CD8-positive, alpha-beta T cell (primary cell): ENCODE measurements at regions of chr6 and their contacts with region 1.

Region 1: GRCh38 chr6:109440331-109441068 is at the starts of genes PPIL6 and SMPD2:
- DNase-seq: peak; percentile 61 to 92 (median 75)
- ATAC-seq: peak; percentile 79
- H3K4me3 ChIP-seq: peak within 1 kb of the TSS; percentile 68 to 92
- H3K4me3 Mint-ChIP-seq: peak within 1 kb of the TSS; percentile 89
- H3K27ac ChIP-seq: peak within 1 kb of the TSS; percentile 69 to 83
- H3K27ac Mint-ChIP-seq: peak within 1 kb of the TSS; percentile 93
- H3K4me1 ChIP-seq: peaks cover 26% of the 10 kb centered on the region
- H3K4me1 Mint-ChIP-seq: peaks cover 35% of the 10 kb centered on the region
- H3K27me3 ChIP-seq: no peaks in the 10 kb centered on the region
- H3K27me3 Mint-ChIP-seq: no peaks in the 10 kb centered on the region
- CTCF ChIP-seq: peak; percentile 31
- total RNA-seq, gene PPIL6: 1.3 to 1.4 TPM
- total RNA-seq, gene SMPD2: 22.8 to 23.9 TPM

Region 2: GRCh38 chr6:109336221-109336961 is 104.1 kb before region 1 on chr6:
- CTCF ChIA-PET with region 1: no interaction called
- POLR2A ChIA-PET with region 1: no interaction called
- intact Hi-C with region 1: no loop called
- DNase-seq: no peak
- ATAC-seq: no peak
- H3K4me3 ChIP-seq: no peak overlapping the region
- H3K4me3 Mint-ChIP-seq: no peak overlapping the region
- H3K27ac ChIP-seq: no peak overlapping the region
- H3K27ac Mint-ChIP-seq: no peak overlapping the region
- H3K4me1 ChIP-seq: no peaks in the 10 kb centered on the region
- H3K4me1 Mint-ChIP-seq: peaks cover 3% of the 10 kb centered on the region
- H3K27me3 ChIP-seq: no peaks in the 10 kb centered on the region
- H3K27me3 Mint-ChIP-seq: no peaks in the 10 kb centered on the region
- CTCF ChIP-seq: no peak

Region 3: DNA sequence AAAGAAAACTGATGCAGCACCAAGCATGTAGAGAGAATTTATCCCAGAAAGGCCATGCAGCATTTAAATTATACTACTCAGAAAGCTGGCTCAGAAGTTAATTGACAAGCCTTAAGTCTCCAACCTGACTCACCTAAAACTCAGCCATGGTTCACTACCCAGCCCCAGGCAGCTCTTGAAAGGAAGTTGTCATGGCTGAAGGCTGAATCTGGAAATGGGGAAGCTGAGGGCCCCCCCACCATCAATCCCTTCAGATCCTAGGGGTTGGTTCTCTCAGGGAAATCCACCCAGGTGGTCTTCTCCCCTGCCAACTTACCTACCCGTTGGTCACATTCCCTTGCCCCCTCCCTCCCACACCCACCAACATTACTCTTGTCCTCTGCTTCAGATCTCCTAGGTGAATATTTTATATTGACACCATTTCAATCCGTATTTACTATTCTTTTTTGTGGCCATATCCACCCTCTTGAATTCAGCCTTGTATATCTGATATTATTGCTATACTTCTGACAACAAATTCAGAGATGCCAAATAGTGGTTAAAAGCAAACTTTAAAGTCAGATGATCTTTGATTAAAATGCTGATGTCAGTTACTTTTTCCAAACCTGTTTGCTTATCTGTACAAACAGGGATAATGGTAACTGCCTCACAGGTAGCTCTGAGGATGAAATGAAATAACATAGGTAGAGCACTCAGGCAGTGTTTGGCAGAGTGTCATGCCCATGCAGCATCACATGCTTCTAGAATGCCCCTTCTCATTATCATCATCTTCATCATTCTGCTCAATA is 19.5 kb before region 1 on chr6:
- CTCF ChIA-PET with region 1: no interaction called
- POLR2A ChIA-PET with region 1: no interaction called
- intact Hi-C with region 1: no loop called
- DNase-seq: no peak
- ATAC-seq: no peak
- H3K4me3 ChIP-seq: no peak overlapping the region
- H3K4me3 Mint-ChIP-seq: no peak overlapping the region
- H3K27ac ChIP-seq: no peak overlapping the region
- H3K27ac Mint-ChIP-seq: no peak overlapping the region
- H3K4me1 ChIP-seq: no peaks in the 10 kb centered on the region
- H3K4me1 Mint-ChIP-seq: no peaks in the 10 kb centered on the region
- H3K27me3 ChIP-seq: no peaks in the 10 kb centered on the region
- H3K27me3 Mint-ChIP-seq: no peaks in the 10 kb centered on the region
- CTCF ChIP-seq: no peak

Region 4: GRCh38 chr6:109455502-109456282 is 15.2 kb after region 1 on chr6 and contains the start of gene MICAL1:
- CTCF ChIA-PET with region 1: interaction called, 25 read pairs
- POLR2A ChIA-PET with region 1: interaction called, 74 read pairs
- intact Hi-C with region 1: loop called (anchors 1 kb)
- DNase-seq: peak; percentile 53 to 91 (median 77)
- ATAC-seq: peak; percentile 58
- H3K4me3 ChIP-seq: peak within 1 kb of the TSS; percentile 93 to 99
- H3K4me3 Mint-ChIP-seq: peak within 1 kb of the TSS; percentile 97
- H3K27ac ChIP-seq: peak within 1 kb of the TSS; percentile 89 to 98
- H3K27ac Mint-ChIP-seq: peak within 1 kb of the TSS; percentile 98
- H3K4me1 ChIP-seq: peaks cover 55% of the 10 kb centered on the region
- H3K4me1 Mint-ChIP-seq: peaks cover 65% of the 10 kb centered on the region
- H3K27me3 ChIP-seq: no peaks in the 10 kb centered on the region
- H3K27me3 Mint-ChIP-seq: no peaks in the 10 kb centered on the region
- CTCF ChIP-seq: no peak
- total RNA-seq, gene MICAL1: 68.0 to 76.4 TPM

Region 5: GRCh38 chr6:109472132-109472995 is 31.9 kb after region 1 on chr6:
- CTCF ChIA-PET with region 1: no interaction called
- POLR2A ChIA-PET with region 1: no interaction called
- intact Hi-C with region 1: no loop called
- DNase-seq: no peak
- ATAC-seq: no peak
- H3K4me3 ChIP-seq: no peak overlapping the region
- H3K4me3 Mint-ChIP-seq: no peak overlapping the region
- H3K27ac ChIP-seq: no peak overlapping the region
- H3K27ac Mint-ChIP-seq: peak overlapping the region; percentile 42
- H3K4me1 ChIP-seq: peaks cover 13% of the 10 kb centered on the region
- H3K4me1 Mint-ChIP-seq: peaks cover 74% of the 10 kb centered on the region
- H3K27me3 ChIP-seq: no peaks in the 10 kb centered on the region
- H3K27me3 Mint-ChIP-seq: no peaks in the 10 kb centered on the region
- CTCF ChIP-seq: no peak

Region 6: GRCh38 chr6:110547266-110547964 is 1106.9 kb after region 1 on chr6:
- CTCF ChIA-PET with region 1: no interaction called
- POLR2A ChIA-PET with region 1: no interaction called
- intact Hi-C with region 1: no loop called
- DNase-seq: no peak
- ATAC-seq: no peak
- H3K4me3 ChIP-seq: no peak overlapping the region
- H3K4me3 Mint-ChIP-seq: no peak overlapping the region
- H3K27ac ChIP-seq: no peak overlapping the region
- H3K27ac Mint-ChIP-seq: no peak overlapping the region
- H3K4me1 ChIP-seq: no peaks in the 10 kb centered on the region
- H3K4me1 Mint-ChIP-seq: peaks cover 8% of the 10 kb centered on the region
- H3K27me3 ChIP-seq: no peaks in the 10 kb centered on the region
- H3K27me3 Mint-ChIP-seq: peaks cover 4% of the 10 kb centered on the region
- CTCF ChIP-seq: no peak